ENCODE measurements at regions of chr11 and their contacts with region 1.

Region 1: DNA sequence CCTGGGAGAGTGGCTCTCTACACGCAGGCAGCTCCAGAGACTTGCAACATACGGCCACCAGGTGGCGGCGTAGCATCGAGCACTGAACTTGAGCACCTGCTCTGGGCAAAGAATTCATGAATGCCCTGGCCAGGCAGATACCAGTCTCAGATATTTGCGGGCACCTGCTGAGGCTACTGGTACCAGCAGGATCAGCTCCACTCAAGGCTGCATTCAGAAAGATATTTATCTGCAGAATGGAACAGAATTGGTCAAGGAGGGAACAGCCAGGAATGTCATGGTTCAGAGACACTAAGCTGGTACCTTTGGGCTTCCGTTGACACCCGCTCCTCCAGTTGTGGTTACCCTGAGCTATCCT is 10.8 kb upstream of the CCDC86 start:
- DNase-seq: peak; percentile 65 to 91
- ATAC-seq: peak; percentile 91

Region 2: GRCh38 chr11:60887556-60887955 is 56.4 kb after region 1 on chr11:
- intact Hi-C with region 1: loop called in 1 of 2 experiments (anchors 5 kb)
- DNase-seq: peak in 1 of 2 donors; percentile 72
- ATAC-seq: peak; percentile 95

Region 3: GRCh38 chr11:60899046-60899936 is 68.2 kb after region 1 on chr11:
- intact Hi-C with region 1: loop called in 1 of 2 experiments (anchors 5 kb)
- DNase-seq: no peak
- ATAC-seq: peak; percentile 53